ENCODE measurements at regions of chr2 and their contacts with region 1.

Region 1: GRCh38 chr2:168961450-168962229 is 60.5 kb downstream of the G6PC2 start:
- DNase-seq: peak in 1 of 3 donors; percentile 80
- ATAC-seq: peak; percentile 98
- H3K4me3 ChIP-seq: no peak overlapping the region
- H3K4me1 ChIP-seq: peaks cover 5% of the 10 kb centered on the region
- CTCF ChIP-seq: peak; percentile 67

Region 2: GRCh38 chr2:169109502-169110409 is 148.1 kb after region 1 on chr2:
- intact Hi-C with region 1: loop called in 1 of 2 experiments (anchors 10 kb)
- DNase-seq: peak; percentile 63 to 86 (median 76)
- ATAC-seq: peak; percentile 85
- H3K4me3 ChIP-seq: no peak overlapping the region
- H3K4me1 ChIP-seq: peaks cover 5% of the 10 kb centered on the region
- CTCF ChIP-seq: peak; percentile 73

Region 3: DNA sequence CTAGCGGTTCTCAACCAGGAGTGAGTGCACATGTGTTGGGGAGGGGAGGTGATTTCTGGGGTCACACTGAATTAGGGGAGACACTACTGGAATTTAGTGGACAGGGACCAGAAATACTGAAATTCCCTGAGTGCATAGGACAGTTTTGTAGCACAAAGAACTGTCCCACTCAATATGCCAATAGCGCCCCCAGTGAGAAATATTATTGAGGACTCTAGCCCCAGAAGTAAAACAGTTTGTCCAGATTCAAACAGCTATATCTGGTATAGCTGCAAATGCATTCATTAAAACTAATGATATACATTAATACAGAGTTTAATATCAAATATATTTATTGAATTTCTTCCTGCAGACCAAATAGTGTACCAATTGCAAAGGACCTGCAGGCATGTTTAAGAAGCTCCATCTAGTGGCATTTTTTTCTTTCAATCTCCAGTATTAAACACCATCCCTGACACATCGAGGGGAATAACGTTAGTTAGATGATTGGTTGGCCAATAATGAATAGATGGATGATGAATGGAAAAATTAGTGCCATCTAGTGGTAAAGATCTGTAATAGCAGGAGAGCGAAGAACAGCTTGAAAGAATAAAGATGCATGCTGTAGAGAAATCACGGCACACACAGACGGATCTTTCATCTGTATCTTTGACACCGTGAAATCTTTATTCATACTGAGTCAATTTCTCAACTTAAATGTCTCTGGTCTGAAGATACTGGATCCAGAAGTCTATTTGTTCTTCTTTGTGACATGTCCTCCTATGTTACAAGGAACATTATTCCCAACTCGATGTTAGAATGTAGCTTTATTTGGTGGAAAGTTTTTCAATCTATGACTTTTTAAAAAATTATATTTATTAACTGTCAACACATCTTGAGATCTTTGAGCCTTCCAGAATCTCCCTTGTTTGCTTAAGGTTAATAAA is 170.2 kb after region 1 on chr2:
- intact Hi-C with region 1: loop called in 1 of 2 experiments (anchors 10 kb)
- DNase-seq: no peak
- ATAC-seq: peak; percentile 79
- H3K4me3 ChIP-seq: no peak overlapping the region
- H3K4me1 ChIP-seq: no peaks in the 10 kb centered on the region
- CTCF ChIP-seq: peak; percentile 70

Measured in mucosa of descending colon (tissue), 3 donors.